CD14-positive monocyte (primary cell): ENCODE measurements at regions of chr5 and their contacts with region 1.

Region 1: DNA sequence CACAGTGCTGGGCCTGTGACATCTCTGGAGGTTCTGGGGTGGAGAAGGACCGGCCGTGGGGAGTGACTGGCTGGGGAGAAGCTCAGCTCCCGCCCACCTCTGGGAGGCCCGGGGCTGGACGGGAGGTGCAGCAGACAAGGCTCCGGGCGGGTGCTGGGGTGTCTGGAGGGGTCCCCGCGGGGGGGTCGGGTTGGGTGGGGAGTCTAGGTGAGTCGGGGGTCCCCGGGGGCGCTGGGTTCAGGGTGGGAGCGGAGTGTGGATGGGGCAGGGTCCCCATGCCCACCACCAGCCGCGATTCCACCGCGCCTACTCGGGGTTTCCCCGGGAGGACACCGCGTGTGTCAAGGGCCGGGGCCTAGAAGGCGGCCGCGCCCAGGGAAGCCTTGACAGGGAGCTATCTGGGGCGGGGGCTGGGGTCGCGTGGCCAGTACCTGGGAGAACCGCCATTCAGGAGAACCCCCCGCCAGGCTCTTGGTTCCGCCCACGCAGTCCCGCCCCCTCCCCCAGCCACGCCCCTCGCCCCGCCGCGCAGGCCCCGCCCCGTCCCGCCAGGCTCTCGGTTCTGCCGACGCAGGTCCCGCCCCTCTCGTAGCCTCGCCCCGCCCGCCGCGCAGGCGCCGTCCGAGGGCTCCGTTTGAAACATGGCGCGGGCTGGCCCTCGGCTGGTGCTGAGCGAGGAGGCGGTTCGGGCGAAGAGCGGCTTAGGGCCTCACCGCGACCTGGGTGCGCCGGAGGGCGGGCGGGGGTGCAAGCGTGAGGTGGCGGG is at the start of gene CEP72:
- DNase-seq: peak; percentile 81 to 85 (median 84)
- H3K4me3 ChIP-seq: peak within 1 kb of the TSS; percentile 58 to 88 (median 85)
- H3K4me3 Mint-ChIP-seq: peak within 1 kb of the TSS; percentile 83 to 96
- H3K27ac ChIP-seq: peak within 1 kb of the TSS in 1 of 2 donors; percentile 50
- H3K27ac Mint-ChIP-seq: peak within 1 kb of the TSS in 3 of 7 donors; percentile 46 to 65 (median 53)
- H3K4me1 ChIP-seq: peaks cover 26 to 33% of the 10 kb centered on the region in 2 donors
- H3K4me1 Mint-ChIP-seq: peaks cover 34% of the 10 kb centered on the region
- H3K27me3 ChIP-seq: peaks cover 0 to 27% of the 10 kb centered on the region in 2 donors
- H3K27me3 Mint-ChIP-seq: peaks cover 27 to 35% (median 31%) of the 10 kb centered on the region in 3 donors
- CTCF ChIP-seq: no peak
- polyA plus RNA-seq, gene CEP72: 0.13 to 2.1 (median 0.24) TPM

Region 2: GRCh38 chr5:264346-264745 is 347.6 kb before region 1 on chr5:
- intact Hi-C with region 1: loop called in 1 of 2 experiments (anchors 10 kb)
- DNase-seq: no peak
- H3K4me3 ChIP-seq: no peak overlapping the region
- H3K4me3 Mint-ChIP-seq: no peak overlapping the region
- H3K27ac ChIP-seq: no peak overlapping the region
- H3K27ac Mint-ChIP-seq: peak overlapping the region in 1 of 7 donors; percentile 53
- H3K4me1 ChIP-seq: no peaks in the 10 kb centered on the region
- H3K4me1 Mint-ChIP-seq: no peaks in the 10 kb centered on the region
- H3K27me3 ChIP-seq: no peaks in the 10 kb centered on the region
- H3K27me3 Mint-ChIP-seq: peaks cover 0 to 3% (median 2%) of the 10 kb centered on the region in 3 donors
- CTCF ChIP-seq: no peak

Region 3: GRCh38 chr5:442335-443238 is 169.3 kb before region 1 on chr5 and contains the start of gene EXOC3:
- intact Hi-C with region 1: loop called (anchors 5 to 10 kb)
- DNase-seq: peak; percentile 63 to 69 (median 68)
- H3K4me3 ChIP-seq: peak within 1 kb of the TSS; percentile 84 to 92 (median 85)
- H3K4me3 Mint-ChIP-seq: peak within 1 kb of the TSS; percentile 92 to 94
- H3K27ac ChIP-seq: peak within 1 kb of the TSS; percentile 49 to 84
- H3K27ac Mint-ChIP-seq: peak within 1 kb of the TSS; percentile 85 to 93 (median 91)
- H3K4me1 ChIP-seq: peaks cover 43 to 44% of the 10 kb centered on the region in 2 donors
- H3K4me1 Mint-ChIP-seq: peaks cover 41% of the 10 kb centered on the region
- H3K27me3 ChIP-seq: no peaks in the 10 kb centered on the region
- H3K27me3 Mint-ChIP-seq: peaks cover 0 to 2% (median 0%) of the 10 kb centered on the region in 3 donors
- CTCF ChIP-seq: no peak
- polyA plus RNA-seq, gene EXOC3: 33.2 to 59.7 (median 53.8) TPM

Region 4: GRCh38 chr5:543825-544674 is 67.9 kb before region 1 on chr5:
- intact Hi-C with region 1: loop called (anchors 5 kb)
- DNase-seq: peak; percentile 88 to 93 (median 92)
- H3K4me3 ChIP-seq: peak overlapping the region in 1 of 3 experiments; percentile 26
- H3K4me3 Mint-ChIP-seq: peak overlapping the region; percentile 37 to 63
- H3K27ac ChIP-seq: peak overlapping the region; percentile 15 to 27
- H3K27ac Mint-ChIP-seq: peak overlapping the region in 6 of 7 donors; percentile 67 to 87 (median 82)
- H3K4me1 ChIP-seq: peaks cover 19 to 25% of the 10 kb centered on the region in 2 donors
- H3K4me1 Mint-ChIP-seq: peaks cover 31% of the 10 kb centered on the region
- H3K27me3 ChIP-seq: peaks cover 1 to 79% of the 10 kb centered on the region in 2 donors
- H3K27me3 Mint-ChIP-seq: peaks cover 51 to 86% (median 65%) of the 10 kb centered on the region in 3 donors
- CTCF ChIP-seq: no peak

Region 5: GRCh38 chr5:1799602-1800471 is 1187.9 kb after region 1 on chr5 and contains the start of gene MRPL36:
- intact Hi-C with region 1: loop called in 1 of 2 experiments (anchors 10 kb)
- DNase-seq: peak; percentile 90 to 92 (median 92)
- H3K4me3 ChIP-seq: peak within 1 kb of the TSS; percentile 61 to 90 (median 82)
- H3K4me3 Mint-ChIP-seq: peak within 1 kb of the TSS; percentile 95 to 100
- H3K27ac ChIP-seq: peak within 1 kb of the TSS; percentile 60 to 91
- H3K27ac Mint-ChIP-seq: peak within 1 kb of the TSS; percentile 95 to 98 (median 98)
- H3K4me1 ChIP-seq: peaks cover 18 to 33% of the 10 kb centered on the region in 2 donors
- H3K4me1 Mint-ChIP-seq: peaks cover 40% of the 10 kb centered on the region
- H3K27me3 ChIP-seq: no peaks in the 10 kb centered on the region
- H3K27me3 Mint-ChIP-seq: peaks cover 0 to 2% (median 0%) of the 10 kb centered on the region in 3 donors
- CTCF ChIP-seq: no peak
- polyA plus RNA-seq, gene MRPL36: 17.9 to 81.7 (median 65.9) TPM